ENCODE measurements at regions of chr6 and their contacts with region 1.

Region 1: DNA sequence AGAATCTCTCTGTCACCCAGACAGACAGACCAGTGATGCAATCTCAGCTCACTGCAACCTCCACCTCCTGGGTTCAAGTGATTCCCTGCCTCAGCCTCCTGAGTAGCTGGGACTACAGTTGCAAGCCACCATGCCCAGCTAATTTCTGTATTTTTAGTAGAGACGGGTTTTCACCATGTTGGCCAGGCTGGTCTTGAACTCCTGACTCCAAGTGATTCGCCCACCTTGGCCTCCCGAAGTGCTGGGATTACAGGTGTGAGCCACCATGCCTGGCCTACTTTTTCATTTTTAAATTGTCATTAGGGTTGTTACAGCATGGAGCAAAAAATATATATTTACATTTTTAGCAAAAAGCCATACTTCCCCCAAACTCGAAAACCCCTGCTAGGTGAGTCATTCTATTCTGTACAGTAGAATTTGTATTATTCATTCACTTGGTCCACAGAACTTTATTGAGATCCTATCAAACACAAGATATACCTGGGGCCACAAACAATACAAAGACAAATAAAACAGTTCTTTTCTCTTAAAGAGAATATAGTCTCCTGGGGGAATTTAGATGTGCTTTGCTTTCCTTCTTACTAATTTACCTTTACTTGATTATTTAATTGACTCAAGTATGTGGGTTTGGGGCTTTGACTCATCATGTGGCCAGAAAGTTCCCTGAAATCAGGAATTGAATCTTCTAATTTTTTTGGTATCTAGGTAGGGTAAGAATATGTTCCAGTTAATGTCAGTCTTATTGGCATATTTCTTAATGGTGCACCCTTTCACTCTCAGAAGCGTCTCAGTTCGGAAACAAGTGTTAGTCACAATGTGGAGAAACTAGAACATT is 16.6 kb upstream of the CCND3 start:
- DNase-seq: no peak
- H3K4me3 Mint-ChIP-seq: peak overlapping the region; percentile 29
- H3K27ac Mint-ChIP-seq: peak overlapping the region; percentile 88
- H3K4me1 Mint-ChIP-seq: peaks cover 26% of the 10 kb centered on the region
- H3K27me3 Mint-ChIP-seq: no peaks in the 10 kb centered on the region

Region 2: GRCh38 chr6:41941280-41942066 is 16.8 kb before region 1 on chr6 and contains the start of gene CCND3:
- intact Hi-C with region 1: loop called (anchors 1 kb)
- DNase-seq: peak; percentile 89
- H3K4me3 Mint-ChIP-seq: peak within 1 kb of the TSS; percentile 99
- H3K27ac Mint-ChIP-seq: peak within 1 kb of the TSS; percentile 94
- H3K4me1 Mint-ChIP-seq: peaks cover 43% of the 10 kb centered on the region
- H3K27me3 Mint-ChIP-seq: no peaks in the 10 kb centered on the region
- total RNA-seq, gene CCND3: 351 and 356 TPM in 2 replicates

Region 3: DNA sequence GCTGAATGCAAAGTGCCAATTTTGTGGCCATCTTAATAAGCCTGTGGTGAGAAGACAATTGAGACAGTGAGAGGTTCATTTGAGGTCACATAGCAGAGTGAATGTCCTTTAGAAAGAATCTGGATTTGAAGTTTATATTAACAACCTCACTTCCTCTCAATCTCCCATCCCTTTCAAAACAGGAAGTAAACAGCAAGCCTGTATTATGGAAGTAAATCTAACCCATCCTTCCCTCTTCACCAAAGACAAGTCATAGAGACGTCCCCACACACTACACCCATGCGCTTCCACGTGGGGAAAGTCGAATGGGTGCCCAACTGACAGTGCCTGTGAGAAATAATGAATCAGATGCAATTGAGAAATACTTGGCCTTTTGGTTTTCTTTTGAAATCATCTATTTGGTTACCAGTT is 12.2 kb after region 1 on chr6:
- intact Hi-C with region 1: loop called (anchors 1 kb)
- DNase-seq: no peak
- H3K4me3 Mint-ChIP-seq: peak overlapping the region; percentile 15
- H3K27ac Mint-ChIP-seq: peak overlapping the region; percentile 93
- H3K4me1 Mint-ChIP-seq: peaks cover 36% of the 10 kb centered on the region
- H3K27me3 Mint-ChIP-seq: no peaks in the 10 kb centered on the region

Region 4: DNA sequence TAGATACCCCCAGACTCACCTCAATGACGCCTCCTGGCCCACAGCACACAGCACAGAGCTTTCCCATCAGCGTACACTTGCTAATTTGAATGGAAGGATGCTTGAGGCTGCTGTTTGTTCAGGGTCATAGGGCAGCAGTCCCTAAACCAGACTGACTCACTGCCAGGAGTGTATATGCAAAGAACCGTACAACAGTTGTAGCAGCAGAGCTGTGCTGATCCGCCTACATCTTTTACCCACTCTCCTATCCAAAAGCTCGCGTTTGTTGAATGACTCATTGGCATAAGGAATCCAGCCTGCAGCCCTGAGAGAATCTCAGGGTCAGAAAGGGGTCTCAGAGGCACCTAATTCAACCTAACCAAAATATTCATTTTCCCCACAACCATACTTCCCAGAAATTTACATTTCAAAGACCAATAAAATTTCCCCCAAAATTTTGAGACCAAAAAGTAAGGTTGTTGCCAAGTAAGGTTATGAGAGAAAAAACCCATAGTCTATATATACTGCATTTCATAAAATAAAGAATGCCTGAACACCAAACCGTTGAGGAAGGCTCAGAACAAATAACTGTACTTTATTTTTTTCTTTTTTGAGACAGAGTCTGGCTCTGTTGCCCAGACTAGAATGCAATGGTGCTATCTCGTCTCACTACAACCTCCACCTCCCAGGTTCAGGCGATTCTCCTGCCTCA is 18.7 kb after region 1 on chr6:
- intact Hi-C with region 1: loop called (anchors 1 kb)
- DNase-seq: no peak
- H3K4me3 Mint-ChIP-seq: no peak overlapping the region
- H3K27ac Mint-ChIP-seq: peak overlapping the region; percentile 84
- H3K4me1 Mint-ChIP-seq: peaks cover 39% of the 10 kb centered on the region
- H3K27me3 Mint-ChIP-seq: no peaks in the 10 kb centered on the region

Region 5: GRCh38 chr6:42030585-42031506 is 72.6 kb after region 1 on chr6:
- intact Hi-C with region 1: loop called (anchors 1 kb)
- DNase-seq: no peak
- H3K4me3 Mint-ChIP-seq: peak overlapping the region; percentile 64
- H3K27ac Mint-ChIP-seq: peak overlapping the region; percentile 91
- H3K4me1 Mint-ChIP-seq: peaks cover 79% of the 10 kb centered on the region
- H3K27me3 Mint-ChIP-seq: no peaks in the 10 kb centered on the region

Region 6: GRCh38 chr6:42038811-42039408 is 80.7 kb after region 1 on chr6:
- intact Hi-C with region 1: loop called (anchors 1 kb)
- DNase-seq: no peak
- H3K4me3 Mint-ChIP-seq: peak overlapping the region; percentile 81
- H3K27ac Mint-ChIP-seq: peak overlapping the region; percentile 94
- H3K4me1 Mint-ChIP-seq: peaks cover 61% of the 10 kb centered on the region
- H3K27me3 Mint-ChIP-seq: no peaks in the 10 kb centered on the region

Region 7: GRCh38 chr6:42043787-42044475 is 85.7 kb after region 1 on chr6:
- intact Hi-C with region 1: loop called (anchors 1 kb)
- DNase-seq: peak; percentile 87
- H3K4me3 Mint-ChIP-seq: peak overlapping the region; percentile 70
- H3K27ac Mint-ChIP-seq: peak overlapping the region; percentile 83
- H3K4me1 Mint-ChIP-seq: peaks cover 82% of the 10 kb centered on the region
- H3K27me3 Mint-ChIP-seq: no peaks in the 10 kb centered on the region

Measured in activated T-helper 1 cell treated with anti-CD3 and anti-CD28 coated beads, Interleukin-12 subunit alpha, Interleukin-12 subunit beta, Interleukin-2, Interleukin-4 antibody, amounts not matched to agents 30 ng/mL and 10 ng/mL and 1 ng/mL, durations not matched to agents 14 hours and 24 hours and 36 hours (primary cell).